CD8-positive, alpha-beta T cell (primary cell): ENCODE measurements at regions of chr6 and their contacts with region 1.

Region 1: GRCh38 chr6:28838634-28839442 is 84.9 kb downstream of the TRIM27 start:
- DNase-seq: peak; percentile 54 to 90 (median 82)
- ATAC-seq: peak; percentile 68
- H3K4me3 ChIP-seq: peak overlapping the region; percentile 74 to 75
- H3K4me3 Mint-ChIP-seq: peak overlapping the region; percentile 92
- H3K27ac ChIP-seq: peak overlapping the region; percentile 44 to 58
- H3K27ac Mint-ChIP-seq: peak overlapping the region; percentile 89
- H3K4me1 ChIP-seq: peaks cover 14% of the 10 kb centered on the region
- H3K4me1 Mint-ChIP-seq: peaks cover 14% of the 10 kb centered on the region
- H3K27me3 ChIP-seq: peaks cover 0 to 7% of the 10 kb centered on the region in 2 experiments
- H3K27me3 Mint-ChIP-seq: peaks cover 18% of the 10 kb centered on the region
- CTCF ChIP-seq: peak; percentile 63

Region 2: GRCh38 chr6:28399350-28400121 is 439.3 kb before region 1 on chr6 and contains the start of gene ZSCAN12:
- CTCF ChIA-PET with region 1: no interaction called
- POLR2A ChIA-PET with region 1: no interaction called
- intact Hi-C with region 1: loop called in 1 of 2 experiments (anchors 2 kb)
- DNase-seq: peak; percentile 76 to 92 (median 86)
- ATAC-seq: peak; percentile 96
- H3K4me3 ChIP-seq: peak within 1 kb of the TSS; percentile 87 to 96
- H3K4me3 Mint-ChIP-seq: peak within 1 kb of the TSS; percentile 93
- H3K27ac ChIP-seq: peak within 1 kb of the TSS; percentile 73 to 85
- H3K27ac Mint-ChIP-seq: peak within 1 kb of the TSS; percentile 97
- H3K4me1 ChIP-seq: peaks cover 32% of the 10 kb centered on the region
- H3K4me1 Mint-ChIP-seq: peaks cover 47% of the 10 kb centered on the region
- H3K27me3 ChIP-seq: no peaks in the 10 kb centered on the region
- H3K27me3 Mint-ChIP-seq: peaks cover 34% of the 10 kb centered on the region
- CTCF ChIP-seq: no peak
- total RNA-seq, gene ZSCAN12: 2.8 to 3.0 TPM

Region 3: DNA sequence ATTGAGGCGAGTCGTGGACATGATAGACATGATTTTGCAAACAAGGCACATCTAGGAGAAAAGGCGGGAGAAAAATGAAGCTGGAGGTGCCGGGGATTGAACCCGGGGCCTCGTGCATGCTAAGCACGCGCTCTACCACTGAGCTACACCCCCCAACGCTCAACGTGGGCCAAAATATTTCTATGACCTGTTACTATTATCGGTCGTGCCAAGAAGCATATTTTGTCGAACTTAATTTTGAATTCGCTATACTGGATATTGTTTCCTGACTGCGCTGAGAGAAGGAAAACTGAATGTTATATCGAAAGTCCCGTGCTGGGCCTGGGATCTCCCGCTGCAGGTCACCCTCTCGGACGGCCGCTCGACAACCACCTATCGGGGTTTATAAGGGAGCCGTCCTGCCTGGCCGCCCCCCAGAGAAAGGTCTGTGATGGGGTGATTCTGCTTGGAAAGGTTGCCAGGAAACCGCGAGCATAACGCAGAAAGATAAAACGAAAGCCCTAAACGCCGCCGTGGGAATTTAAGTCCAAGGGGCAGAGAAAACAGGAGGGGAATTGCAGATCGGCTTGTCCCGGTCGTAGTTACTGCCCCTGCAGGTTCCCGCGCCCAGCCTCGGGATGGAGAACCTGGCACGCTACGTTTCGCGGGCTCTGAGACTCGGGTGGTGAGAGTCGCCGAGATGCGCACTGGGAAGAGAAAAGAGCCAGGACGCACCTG is 24.9 kb after region 1 on chr6:
- CTCF ChIA-PET with region 1: interaction called, 35 read pairs
- POLR2A ChIA-PET with region 1: interaction called, 21 read pairs
- intact Hi-C with region 1: loop called (anchors 1 kb)
- DNase-seq: peak; percentile 62 to 93 (median 82)
- ATAC-seq: peak; percentile 35
- H3K4me3 ChIP-seq: peak overlapping the region; percentile 80 to 92
- H3K4me3 Mint-ChIP-seq: peak overlapping the region; percentile 96
- H3K27ac ChIP-seq: peak overlapping the region; percentile 44 to 70
- H3K27ac Mint-ChIP-seq: peak overlapping the region; percentile 94
- H3K4me1 ChIP-seq: peaks cover 14% of the 10 kb centered on the region
- H3K4me1 Mint-ChIP-seq: peaks cover 45% of the 10 kb centered on the region
- H3K27me3 ChIP-seq: no peaks in the 10 kb centered on the region
- H3K27me3 Mint-ChIP-seq: no peaks in the 10 kb centered on the region
- CTCF ChIP-seq: no peak

Region 4: DNA sequence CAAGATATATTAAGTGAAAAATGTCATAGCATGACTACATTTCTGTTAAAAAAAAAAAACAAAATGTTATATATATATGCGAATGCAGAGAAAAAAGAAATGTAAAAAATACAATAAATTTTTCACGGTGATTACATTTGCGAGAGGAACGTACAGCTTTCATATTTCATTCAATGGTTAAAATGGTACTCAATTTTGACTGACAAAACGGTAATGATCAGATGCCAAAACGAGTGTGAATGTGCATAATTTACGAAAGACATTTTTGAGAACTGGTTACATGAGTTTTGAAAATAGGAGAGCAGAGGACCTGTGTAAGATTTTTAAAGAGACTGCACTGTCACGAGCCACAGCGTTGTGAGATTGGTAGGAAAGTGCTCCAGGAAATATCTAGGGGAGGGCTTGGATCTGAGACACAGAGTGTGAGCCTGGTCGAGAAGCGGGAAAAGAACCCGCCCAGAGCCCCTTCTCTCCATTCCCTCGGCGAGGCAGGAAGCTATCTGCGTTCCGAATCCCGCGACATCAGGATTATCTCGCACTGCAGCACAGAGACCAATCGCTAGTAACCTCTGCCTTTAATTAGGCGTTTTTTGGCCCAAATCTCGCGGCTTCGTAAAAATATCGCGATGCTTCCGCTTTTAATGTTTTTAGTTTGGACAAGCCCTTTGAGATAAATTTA is 56.4 kb after region 1 on chr6:
- CTCF ChIA-PET with region 1: interaction called, 14 read pairs
- POLR2A ChIA-PET with region 1: interaction called, 16 read pairs
- intact Hi-C with region 1: loop called (anchors 1 to 2 kb)
- DNase-seq: peak; percentile 83 to 97 (median 90)
- ATAC-seq: peak; percentile 68
- H3K4me3 ChIP-seq: peak overlapping the region; percentile 79 to 80
- H3K4me3 Mint-ChIP-seq: peak overlapping the region; percentile 98
- H3K27ac ChIP-seq: peak overlapping the region; percentile 95 to 98
- H3K27ac Mint-ChIP-seq: peak overlapping the region; percentile 99
- H3K4me1 ChIP-seq: peaks cover 8% of the 10 kb centered on the region
- H3K4me1 Mint-ChIP-seq: peaks cover 18% of the 10 kb centered on the region
- H3K27me3 ChIP-seq: no peaks in the 10 kb centered on the region
- H3K27me3 Mint-ChIP-seq: no peaks in the 10 kb centered on the region
- CTCF ChIP-seq: no peak

Region 5: DNA sequence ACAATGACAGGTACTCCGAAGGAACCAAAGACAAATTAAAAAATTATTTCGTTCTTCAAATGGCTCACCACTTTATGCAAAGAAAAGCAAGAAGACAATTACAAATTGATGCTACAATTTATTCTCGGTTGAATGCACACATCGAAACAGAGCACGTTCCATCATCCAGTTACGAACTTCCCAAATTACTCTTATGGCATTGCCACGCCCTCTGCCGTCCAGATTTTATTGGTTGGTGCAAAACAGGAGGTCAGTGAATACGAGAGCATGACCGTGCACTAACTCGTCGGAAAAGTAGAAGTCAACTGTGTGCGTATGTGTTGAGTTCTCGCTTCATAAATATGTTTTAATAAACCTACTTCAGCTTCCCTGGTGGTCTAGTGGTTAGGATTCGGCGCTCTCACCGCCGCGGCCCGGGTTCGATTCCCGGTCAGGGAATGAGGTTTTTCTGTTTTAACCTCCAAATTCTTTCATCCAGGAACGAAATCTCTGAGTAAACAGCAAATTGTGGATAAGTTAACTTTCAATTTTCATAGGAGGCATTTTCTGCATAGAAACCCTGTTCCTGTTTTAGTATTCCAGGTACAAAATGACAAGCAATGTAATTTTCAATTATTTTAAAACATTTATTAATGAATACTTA is 143.1 kb after region 1 on chr6:
- CTCF ChIA-PET with region 1: interaction called, 44 read pairs
- POLR2A ChIA-PET with region 1: interaction called, 15 read pairs
- intact Hi-C with region 1: loop called (anchors 1 kb)
- DNase-seq: peak; percentile 43 to 89 (median 70)
- ATAC-seq: peak; percentile 69
- H3K4me3 ChIP-seq: peak overlapping the region; percentile 94 to 98
- H3K4me3 Mint-ChIP-seq: peak overlapping the region; percentile 89
- H3K27ac ChIP-seq: peak overlapping the region; percentile 14 to 59
- H3K27ac Mint-ChIP-seq: peak overlapping the region; percentile 91
- H3K4me1 ChIP-seq: peaks cover 17% of the 10 kb centered on the region
- H3K4me1 Mint-ChIP-seq: peaks cover 59% of the 10 kb centered on the region
- H3K27me3 ChIP-seq: peaks cover 0 to 6% of the 10 kb centered on the region in 2 experiments
- H3K27me3 Mint-ChIP-seq: peaks cover 34% of the 10 kb centered on the region
- CTCF ChIP-seq: no peak

Region 6: DNA sequence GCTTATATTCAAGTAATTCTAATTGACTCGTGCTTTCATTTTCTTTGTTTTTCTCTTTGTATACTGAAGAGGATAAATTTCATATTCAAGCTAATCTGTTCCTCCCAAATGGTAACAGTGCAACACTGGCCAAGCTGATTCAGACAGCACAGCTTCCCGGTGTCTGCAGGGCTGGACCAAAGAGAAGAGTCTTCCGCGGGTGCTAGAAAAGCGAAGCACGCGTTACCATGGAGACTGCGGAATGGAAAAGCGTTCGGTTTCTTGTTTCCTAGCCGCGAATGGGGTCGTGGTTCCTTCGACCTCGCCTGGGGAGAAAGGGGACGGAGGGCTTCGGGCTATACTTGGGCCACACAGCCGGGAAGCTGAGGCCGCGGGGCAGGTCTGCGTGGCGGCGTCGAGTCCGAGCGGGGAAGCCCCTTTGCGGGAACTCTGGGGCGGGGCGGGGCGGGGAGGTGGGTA is 172.5 kb after region 1 on chr6:
- CTCF ChIA-PET with region 1: interaction called, 140 read pairs
- POLR2A ChIA-PET with region 1: interaction called, 17 read pairs
- intact Hi-C with region 1: no loop called
- DNase-seq: peak in 7 of 9 experiments; percentile 15 to 72 (median 51)
- ATAC-seq: peak; percentile 36
- H3K4me3 ChIP-seq: peak overlapping the region; percentile 39 to 51
- H3K4me3 Mint-ChIP-seq: peak overlapping the region; percentile 86
- H3K27ac ChIP-seq: peak overlapping the region in 1 of 2 experiments; percentile 44
- H3K27ac Mint-ChIP-seq: peak overlapping the region; percentile 63
- H3K4me1 ChIP-seq: peaks cover 6% of the 10 kb centered on the region
- H3K4me1 Mint-ChIP-seq: peaks cover 15% of the 10 kb centered on the region
- H3K27me3 ChIP-seq: peaks cover 0 to 14% of the 10 kb centered on the region in 2 experiments
- H3K27me3 Mint-ChIP-seq: peaks cover 27% of the 10 kb centered on the region
- CTCF ChIP-seq: no peak

Region 7: DNA sequence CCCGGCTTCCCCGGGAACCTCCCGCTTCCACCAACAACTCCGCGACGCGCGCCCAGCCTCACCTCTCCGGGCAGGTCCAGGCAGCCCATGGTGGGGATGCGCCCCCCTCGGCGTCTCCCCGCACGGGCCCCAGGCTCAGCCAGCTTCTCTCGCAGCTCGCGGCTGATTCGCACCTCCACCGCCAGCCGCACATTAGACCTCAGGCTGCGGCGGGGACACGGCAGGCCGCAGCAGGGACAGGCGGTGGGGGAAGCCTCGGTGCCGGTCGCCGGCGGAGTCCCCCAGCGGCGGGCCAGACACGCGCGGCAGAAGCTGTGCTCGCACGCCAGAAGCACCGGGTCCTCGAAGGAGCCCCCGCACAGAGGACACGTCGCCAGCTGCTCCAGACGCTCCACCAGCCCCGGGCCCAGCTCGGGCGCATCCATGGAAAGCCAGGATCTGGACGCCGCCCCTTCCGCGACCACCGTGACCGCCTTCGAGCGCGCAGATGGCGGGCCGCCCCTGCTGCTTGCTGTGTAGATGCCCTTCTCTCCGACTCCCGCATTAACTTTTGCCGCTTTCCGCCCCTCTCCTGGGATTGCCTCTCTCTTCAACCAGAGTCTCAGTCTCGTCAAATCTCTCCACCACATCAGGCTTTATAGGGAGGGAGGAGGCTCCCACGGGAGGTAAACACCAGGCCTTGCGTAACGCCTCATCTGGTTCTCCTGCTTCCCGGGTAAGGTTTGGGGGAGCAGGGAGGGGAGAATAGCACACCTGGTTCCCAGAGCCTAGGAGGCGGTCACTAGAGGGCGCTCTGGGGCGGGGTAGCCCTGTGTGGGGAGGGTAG is 1236.5 kb after region 1 on chr6 and contains the start of gene RNF39:
- CTCF ChIA-PET with region 1: no interaction called
- POLR2A ChIA-PET with region 1: no interaction called
- intact Hi-C with region 1: no loop called
- DNase-seq: peak in 2 of 9 experiments; percentile 39 to 46
- ATAC-seq: peak; percentile 50
- H3K4me3 ChIP-seq: peak within 1 kb of the TSS in 1 of 2 experiments; percentile 34
- H3K4me3 Mint-ChIP-seq: peak within 1 kb of the TSS; percentile 72
- H3K27ac ChIP-seq: no peak within 1 kb of the TSS
- H3K27ac Mint-ChIP-seq: no peak within 1 kb of the TSS
- H3K4me1 ChIP-seq: peaks cover 42% of the 10 kb centered on the region
- H3K4me1 Mint-ChIP-seq: peaks cover 41% of the 10 kb centered on the region
- H3K27me3 ChIP-seq: peaks cover 26 to 33% of the 10 kb centered on the region in 2 experiments
- H3K27me3 Mint-ChIP-seq: peaks cover 54% of the 10 kb centered on the region
- CTCF ChIP-seq: peak; percentile 25
- total RNA-seq, gene RNF39: not detected